CD8-positive, alpha-beta T cell (primary cell): ENCODE measurements at regions of chr5 and their contacts with region 1.

Region 1: GRCh38 chr5:115841382-115842088 is at the starts of genes AP3S1 and ATG12:
- DNase-seq: peak; percentile 80 to 96 (median 90)
- ATAC-seq: peak; percentile 84
- H3K4me3 ChIP-seq: peak within 1 kb of the TSS; percentile 77 to 89
- H3K4me3 Mint-ChIP-seq: peak within 1 kb of the TSS; percentile 96
- H3K27ac ChIP-seq: peak within 1 kb of the TSS; percentile 88 to 97
- H3K27ac Mint-ChIP-seq: peak within 1 kb of the TSS; percentile 99
- H3K4me1 ChIP-seq: peaks cover 32% of the 10 kb centered on the region
- H3K4me1 Mint-ChIP-seq: peaks cover 67% of the 10 kb centered on the region
- H3K27me3 ChIP-seq: no peaks in the 10 kb centered on the region
- H3K27me3 Mint-ChIP-seq: no peaks in the 10 kb centered on the region
- CTCF ChIP-seq: no peak
- total RNA-seq, gene AP3S1: 36.5 to 43.5 TPM
- total RNA-seq, gene ATG12: 62.5 to 68.3 TPM

Region 2: DNA sequence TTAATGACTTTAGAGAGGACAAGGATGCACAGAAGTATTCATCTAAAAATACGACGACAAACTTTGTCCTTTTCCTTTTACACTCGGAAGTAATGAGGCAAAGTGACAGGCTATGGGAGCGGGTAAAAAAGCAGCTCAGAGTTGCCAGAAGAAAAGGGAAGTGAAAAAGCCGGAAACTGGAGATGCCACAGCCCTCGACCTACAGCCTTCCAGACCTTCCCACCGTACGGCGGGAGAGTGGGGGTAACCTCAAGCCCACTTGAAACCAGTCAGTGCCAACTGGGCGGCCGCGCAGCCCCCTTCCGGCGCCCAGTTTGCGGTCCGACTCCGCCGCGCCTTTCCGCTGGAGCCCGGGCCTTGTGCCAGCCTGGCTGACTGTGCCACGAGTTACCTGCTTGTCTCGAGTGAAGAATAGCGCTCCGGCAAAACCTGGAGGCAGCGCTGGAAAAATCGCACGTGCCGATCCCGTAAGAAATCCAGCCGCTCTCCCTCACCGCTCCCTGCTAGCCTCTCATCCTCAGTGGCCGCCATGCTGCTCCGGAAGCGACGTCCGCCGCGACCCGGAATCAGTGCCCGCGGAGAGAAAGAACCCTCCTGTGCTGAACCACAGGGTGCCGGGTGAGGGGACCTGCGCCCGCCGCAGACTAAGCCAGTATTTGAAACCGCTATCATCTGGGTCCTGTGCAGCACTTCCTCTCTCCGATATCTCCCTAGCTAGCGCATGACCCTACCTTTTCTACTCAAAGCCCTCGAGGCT is 579.0 kb before region 1 on chr5 and contains the start of gene PGGT1B:
- CTCF ChIA-PET with region 1: interaction called, 3 read pairs
- POLR2A ChIA-PET with region 1: no interaction called
- intact Hi-C with region 1: loop called (anchors 1 to 5 kb)
- DNase-seq: peak; percentile 37 to 83 (median 72)
- ATAC-seq: peak; percentile 94
- H3K4me3 ChIP-seq: peak within 1 kb of the TSS; percentile 82 to 97
- H3K4me3 Mint-ChIP-seq: peak within 1 kb of the TSS; percentile 94
- H3K27ac ChIP-seq: peak within 1 kb of the TSS; percentile 62 to 91
- H3K27ac Mint-ChIP-seq: peak within 1 kb of the TSS; percentile 98
- H3K4me1 ChIP-seq: peaks cover 28% of the 10 kb centered on the region
- H3K4me1 Mint-ChIP-seq: peaks cover 49% of the 10 kb centered on the region
- H3K27me3 ChIP-seq: no peaks in the 10 kb centered on the region
- H3K27me3 Mint-ChIP-seq: no peaks in the 10 kb centered on the region
- CTCF ChIP-seq: no peak
- total RNA-seq, gene PGGT1B: 55.2 to 57.0 TPM

Region 3: DNA sequence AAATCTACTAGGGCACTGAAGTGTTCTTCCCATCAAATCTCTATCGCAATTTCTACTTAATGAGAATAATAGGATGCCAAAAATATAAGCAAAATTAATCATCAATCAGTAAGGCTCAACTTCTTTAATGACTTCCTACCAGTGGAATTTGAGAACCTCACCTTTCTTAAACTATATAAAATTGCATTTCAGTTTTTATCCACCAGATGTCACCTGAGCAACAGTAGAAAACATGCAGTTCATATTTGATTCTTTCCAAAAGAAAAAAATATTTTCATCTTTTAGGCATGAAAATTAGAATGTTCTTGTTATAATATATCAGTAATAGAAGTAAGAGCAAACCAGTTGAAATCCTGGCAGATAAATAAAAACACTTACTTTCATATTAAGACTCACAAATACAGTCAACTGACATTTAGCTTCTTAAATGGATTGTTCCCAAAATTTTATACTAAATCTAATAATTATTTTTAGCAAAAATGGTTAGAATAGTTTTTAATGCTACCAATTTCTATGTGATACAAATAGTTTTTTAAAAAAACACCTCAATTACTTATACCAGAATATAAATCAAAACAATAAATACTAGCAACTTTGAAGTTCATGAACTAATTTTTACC is 531.7 kb before region 1 on chr5:
- CTCF ChIA-PET with region 1: interaction called, 11 read pairs
- POLR2A ChIA-PET with region 1: no interaction called
- intact Hi-C with region 1: loop called (anchors 2 kb)
- DNase-seq: peak in 2 of 9 experiments; percentile 60 to 64
- ATAC-seq: peak; percentile 52
- H3K4me3 ChIP-seq: no peak overlapping the region
- H3K4me3 Mint-ChIP-seq: no peak overlapping the region
- H3K27ac ChIP-seq: no peak overlapping the region
- H3K27ac Mint-ChIP-seq: no peak overlapping the region
- H3K4me1 ChIP-seq: no peaks in the 10 kb centered on the region
- H3K4me1 Mint-ChIP-seq: no peaks in the 10 kb centered on the region
- H3K27me3 ChIP-seq: peaks cover 0 to 2% of the 10 kb centered on the region in 2 experiments
- H3K27me3 Mint-ChIP-seq: peaks cover 26% of the 10 kb centered on the region
- CTCF ChIP-seq: peak; percentile 81

Region 4: DNA sequence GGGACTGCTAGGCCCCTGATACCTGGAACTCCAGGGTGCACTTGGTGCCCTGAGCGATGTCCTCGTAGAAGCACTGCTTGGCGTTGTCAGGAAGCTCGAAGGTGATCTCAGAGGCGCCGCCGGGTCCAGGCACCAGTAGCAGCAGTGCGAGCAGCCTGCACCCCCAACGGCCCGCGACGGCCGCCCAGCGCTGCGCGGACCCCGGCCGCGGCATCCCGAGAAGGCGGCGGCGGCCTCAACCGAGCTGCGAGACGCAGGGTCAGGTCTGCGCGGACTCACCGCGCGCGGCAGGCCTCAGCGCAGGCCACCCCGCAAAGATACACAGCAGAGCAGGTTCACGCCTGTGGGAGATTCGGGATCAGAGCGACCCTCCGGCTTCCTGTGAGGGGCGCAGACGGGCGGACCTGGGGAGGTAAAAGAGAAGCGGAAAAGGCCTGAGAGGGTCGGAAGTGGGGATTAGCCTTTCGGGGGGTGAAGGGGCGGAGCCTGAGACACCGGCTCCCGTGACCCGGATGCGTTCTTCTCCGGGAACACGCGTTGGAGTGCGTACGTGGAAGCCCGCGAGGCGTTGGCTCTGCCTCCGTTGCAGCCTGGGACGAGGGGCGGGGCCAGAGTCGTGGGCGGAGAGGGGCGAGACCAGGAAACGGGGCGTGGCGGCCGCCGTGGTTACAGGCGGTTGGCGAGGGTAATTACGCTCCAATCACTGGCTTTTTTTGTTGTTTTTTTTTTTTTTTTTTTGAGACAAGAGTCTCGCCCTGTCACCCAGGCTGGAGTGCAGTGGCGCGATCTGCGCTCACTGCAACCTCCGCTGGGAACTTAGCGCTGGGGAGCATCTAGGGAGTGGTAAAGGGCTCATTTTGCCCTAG is 215.7 kb before region 1 on chr5 and contains the start of gene TMED7:
- CTCF ChIA-PET with region 1: interaction called, 11 read pairs
- POLR2A ChIA-PET with region 1: interaction called, 9 read pairs
- intact Hi-C with region 1: loop called (anchors 1 to 2 kb)
- DNase-seq: peak; percentile 99 to 100 (median 100)
- ATAC-seq: peak; percentile 92
- H3K4me3 ChIP-seq: peak within 1 kb of the TSS; percentile 78 to 94
- H3K4me3 Mint-ChIP-seq: no peak within 1 kb of the TSS
- H3K27ac ChIP-seq: peak within 1 kb of the TSS; percentile 91 to 93
- H3K27ac Mint-ChIP-seq: no peak within 1 kb of the TSS
- H3K4me1 ChIP-seq: peaks cover 37% of the 10 kb centered on the region
- H3K4me1 Mint-ChIP-seq: peaks cover 35% of the 10 kb centered on the region
- H3K27me3 ChIP-seq: no peaks in the 10 kb centered on the region
- H3K27me3 Mint-ChIP-seq: no peaks in the 10 kb centered on the region
- CTCF ChIP-seq: no peak
- total RNA-seq, gene TMED7: 67.2 to 71.5 TPM

Region 5: GRCh38 chr5:116068028-116068632 is 226.6 kb after region 1 on chr5:
- CTCF ChIA-PET with region 1: no interaction called
- POLR2A ChIA-PET with region 1: no interaction called
- intact Hi-C with region 1: loop called (anchors 5 kb)
- DNase-seq: peak in 5 of 9 experiments; percentile 14 to 76 (median 30)
- ATAC-seq: no peak
- H3K4me3 ChIP-seq: no peak overlapping the region
- H3K4me3 Mint-ChIP-seq: no peak overlapping the region
- H3K27ac ChIP-seq: no peak overlapping the region
- H3K27ac Mint-ChIP-seq: no peak overlapping the region
- H3K4me1 ChIP-seq: no peaks in the 10 kb centered on the region
- H3K4me1 Mint-ChIP-seq: no peaks in the 10 kb centered on the region
- H3K27me3 ChIP-seq: peaks cover 0 to 4% of the 10 kb centered on the region in 2 experiments
- H3K27me3 Mint-ChIP-seq: peaks cover 24% of the 10 kb centered on the region
- CTCF ChIP-seq: peak; percentile 97